ENCODE measurements at regions of chr17 and their contacts with region 1.

Region 1: GRCh38 chr17:50697663-50698274 is 9.9 kb downstream of the ANKRD40 start:
- DNase-seq: peak in 2 of 14 experiments; percentile 19 to 21
- ATAC-seq: no peak
- H3K4me3 ChIP-seq: no peak overlapping the region
- H3K4me3 Mint-ChIP-seq: no peak overlapping the region
- H3K27ac ChIP-seq: no peak overlapping the region
- H3K27ac Mint-ChIP-seq: no peak overlapping the region
- H3K4me1 ChIP-seq: peaks cover 2% of the 10 kb centered on the region
- H3K4me1 Mint-ChIP-seq: peaks cover 26% of the 10 kb centered on the region
- H3K27me3 ChIP-seq: no peaks in the 10 kb centered on the region
- H3K27me3 Mint-ChIP-seq: no peaks in the 10 kb centered on the region
- CTCF ChIP-seq: no peak

Region 2: DNA sequence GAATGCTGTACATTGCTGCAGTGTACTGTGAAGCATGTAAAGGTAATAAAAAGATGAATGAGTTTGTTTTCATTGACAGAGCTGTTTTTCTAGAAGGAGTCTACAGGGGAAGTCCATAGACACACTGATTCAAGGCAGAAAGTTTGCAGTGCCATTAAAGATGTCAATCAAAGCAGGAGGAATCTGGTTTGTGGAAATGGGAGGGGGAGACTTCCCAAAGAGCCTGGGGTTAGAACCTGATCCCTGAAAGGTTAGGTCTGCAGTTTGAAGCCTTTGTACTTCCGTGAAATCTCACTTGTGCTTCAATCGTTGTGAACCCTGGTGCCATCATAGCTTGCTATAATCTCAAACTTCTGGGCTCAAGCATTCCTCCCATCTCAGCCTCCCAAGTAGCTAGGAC is 266.5 kb before region 1 on chr17:
- CTCF ChIA-PET with region 1: no interaction called
- POLR2A ChIA-PET with region 1: no interaction called
- intact Hi-C with region 1: no loop called
- DNase-seq: no peak
- ATAC-seq: no peak
- H3K4me3 ChIP-seq: no peak overlapping the region
- H3K4me3 Mint-ChIP-seq: no peak overlapping the region
- H3K27ac ChIP-seq: no peak overlapping the region
- H3K27ac Mint-ChIP-seq: no peak overlapping the region
- H3K4me1 ChIP-seq: peaks cover 24% of the 10 kb centered on the region
- H3K4me1 Mint-ChIP-seq: peaks cover 17% of the 10 kb centered on the region
- H3K27me3 ChIP-seq: no peaks in the 10 kb centered on the region
- H3K27me3 Mint-ChIP-seq: no peaks in the 10 kb centered on the region
- CTCF ChIP-seq: no peak

Region 3: GRCh38 chr17:50640701-50641351 is 56.9 kb before region 1 on chr17:
- CTCF ChIA-PET with region 1: no interaction called
- POLR2A ChIA-PET with region 1: no interaction called
- intact Hi-C with region 1: no loop called
- DNase-seq: peak in 2 of 14 experiments; percentile 48 to 59
- ATAC-seq: no peak
- H3K4me3 ChIP-seq: no peak overlapping the region
- H3K4me3 Mint-ChIP-seq: no peak overlapping the region
- H3K27ac ChIP-seq: no peak overlapping the region
- H3K27ac Mint-ChIP-seq: no peak overlapping the region
- H3K4me1 ChIP-seq: no peaks in the 10 kb centered on the region
- H3K4me1 Mint-ChIP-seq: no peaks in the 10 kb centered on the region
- H3K27me3 ChIP-seq: peaks cover 22 to 30% of the 10 kb centered on the region in 2 experiments
- H3K27me3 Mint-ChIP-seq: peaks cover 57% of the 10 kb centered on the region
- CTCF ChIP-seq: no peak

Region 4: DNA sequence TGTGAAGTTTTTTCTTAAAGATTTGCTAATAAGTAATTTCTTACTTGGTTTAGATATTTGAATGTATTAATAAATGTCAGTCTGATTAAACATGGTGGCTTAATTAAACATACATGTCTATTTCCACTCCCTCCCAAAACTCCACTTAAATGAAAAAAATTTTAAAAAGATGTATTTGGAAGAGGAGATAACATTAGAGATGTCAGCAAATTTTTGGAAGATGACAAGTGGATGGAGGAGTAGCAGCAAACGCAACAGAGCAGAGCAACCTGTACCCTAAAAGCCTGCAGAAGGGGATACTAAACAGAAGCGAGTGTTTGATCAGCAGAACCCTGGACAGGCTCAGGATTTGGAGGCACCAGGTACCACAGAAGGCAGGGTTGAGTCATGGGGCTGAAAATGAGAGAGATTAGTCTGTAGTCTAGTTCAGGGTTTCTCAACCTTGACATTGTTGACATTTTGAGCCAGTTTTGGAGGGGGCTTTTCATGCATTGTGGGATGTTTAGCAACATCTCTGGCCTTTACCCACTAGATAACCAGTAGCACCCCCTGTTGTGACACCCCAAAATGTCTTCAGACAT is 39.4 kb after region 1 on chr17:
- CTCF ChIA-PET with region 1: no interaction called
- POLR2A ChIA-PET with region 1: interaction called, 3 read pairs
- intact Hi-C with region 1: loop called in 1 of 2 experiments (anchors 5 kb)
- DNase-seq: no peak
- ATAC-seq: no peak
- H3K4me3 ChIP-seq: no peak overlapping the region
- H3K4me3 Mint-ChIP-seq: no peak overlapping the region
- H3K27ac ChIP-seq: no peak overlapping the region
- H3K27ac Mint-ChIP-seq: peak overlapping the region; percentile 24
- H3K4me1 ChIP-seq: peaks cover 22% of the 10 kb centered on the region
- H3K4me1 Mint-ChIP-seq: peaks cover 51% of the 10 kb centered on the region
- H3K27me3 ChIP-seq: no peaks in the 10 kb centered on the region
- H3K27me3 Mint-ChIP-seq: no peaks in the 10 kb centered on the region
- CTCF ChIP-seq: no peak

Measured in CD4-positive, alpha-beta T cell (primary cell).